A673 (cell line): ENCODE measurements at regions of chr6 and their contacts with region 1.

Region 1: GRCh38 chr6:127302728-127303660 is 36.3 kb downstream of the RNF146 start:
- DNase-seq: peak; percentile 79
- H3K4me3 ChIP-seq: no peak overlapping the region
- H3K27ac ChIP-seq: peak overlapping the region; percentile 48
- H3K4me1 ChIP-seq: peaks cover 39% of the 10 kb centered on the region
- H3K27me3 ChIP-seq: no peaks in the 10 kb centered on the region
- CTCF ChIP-seq: peak; percentile 82

Region 2: GRCh38 chr6:127225497-127225896 is 77.5 kb before region 1 on chr6:
- CTCF ChIA-PET with region 1: no interaction called
- POLR2A ChIA-PET with region 1: no interaction called
- intact Hi-C with region 1: no loop called
- DNase-seq: no peak
- H3K4me3 ChIP-seq: no peak overlapping the region
- H3K27ac ChIP-seq: no peak overlapping the region
- H3K4me1 ChIP-seq: no peaks in the 10 kb centered on the region
- H3K27me3 ChIP-seq: no peaks in the 10 kb centered on the region
- CTCF ChIP-seq: no peak

Region 3: GRCh38 chr6:127420556-127420955 is 117.6 kb after region 1 on chr6:
- CTCF ChIA-PET with region 1: interaction called, 3 read pairs
- POLR2A ChIA-PET with region 1: interaction called, 3 read pairs
- intact Hi-C with region 1: loop called (anchors 2 kb)
- DNase-seq: peak; percentile 89
- H3K4me3 ChIP-seq: no peak overlapping the region
- H3K27ac ChIP-seq: no peak overlapping the region
- H3K4me1 ChIP-seq: no peaks in the 10 kb centered on the region
- H3K27me3 ChIP-seq: no peaks in the 10 kb centered on the region
- CTCF ChIP-seq: peak; percentile 69

Region 4: DNA sequence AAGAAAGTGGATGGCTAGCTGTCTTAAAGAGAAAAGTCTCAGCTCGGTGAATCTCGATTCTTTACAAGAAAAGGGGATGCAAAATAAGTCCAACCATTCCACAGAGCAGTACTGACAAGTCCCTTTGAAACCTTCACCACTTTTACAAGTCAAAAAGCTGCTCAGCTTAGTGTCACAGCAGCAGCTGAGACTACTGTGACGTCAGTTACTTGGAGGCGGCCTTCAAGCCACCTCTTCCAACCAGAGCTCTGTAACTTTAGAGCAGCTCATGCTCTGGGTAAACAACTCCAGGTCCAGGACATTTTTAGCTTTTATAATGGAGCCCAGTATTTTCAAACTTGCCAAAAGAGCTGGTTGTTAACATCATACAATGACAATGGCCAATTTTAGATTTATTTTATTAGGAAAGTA is 156.2 kb after region 1 on chr6 and contains the start of gene KIAA0408:
- CTCF ChIA-PET with region 1: no interaction called
- POLR2A ChIA-PET with region 1: no interaction called
- intact Hi-C with region 1: loop called (anchors 5 kb)
- DNase-seq: peak; percentile 80
- H3K4me3 ChIP-seq: peak within 1 kb of the TSS; percentile 28
- H3K27ac ChIP-seq: peak within 1 kb of the TSS; percentile 58
- H3K4me1 ChIP-seq: peaks cover 45% of the 10 kb centered on the region
- H3K27me3 ChIP-seq: no peaks in the 10 kb centered on the region
- CTCF ChIP-seq: no peak
- total RNA-seq, gene KIAA0408: 27.7 and 34.7 TPM in 2 replicates